Dendritic cell treated with granulocyte-macrophage colony-stimulating factor and Interleukin-4, amounts not matched to agents 40 ng/mL and 50 ng/mL, for 4 days (primary cell): ENCODE measurements at regions of chr13 and their contacts with region 1.

Region 1: DNA sequence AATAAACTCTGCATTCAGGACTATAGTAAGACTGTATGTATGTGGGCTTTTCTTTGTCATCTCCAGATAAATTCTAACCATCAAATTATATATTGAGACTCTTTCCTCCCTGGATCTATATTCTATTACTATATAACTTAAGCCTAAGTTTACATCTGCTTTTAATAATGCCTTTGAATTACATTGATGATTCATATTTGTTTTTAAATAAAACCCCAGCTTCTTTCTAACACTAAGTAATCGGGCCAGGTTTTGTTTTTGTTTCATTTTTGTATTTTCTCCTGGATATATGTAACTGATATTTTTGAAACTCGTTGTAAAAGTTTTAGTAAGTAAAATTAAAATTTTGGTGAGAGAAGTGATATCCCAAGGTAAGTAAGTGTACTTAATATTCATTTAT is 1599.1 kb downstream of the PCDH9 start:
- H3K4me3 Mint-ChIP-seq: no peak overlapping the region
- H3K27ac Mint-ChIP-seq: no peak overlapping the region
- H3K4me1 Mint-ChIP-seq: no peaks in the 10 kb centered on the region
- H3K27me3 Mint-ChIP-seq: no peaks in the 10 kb centered on the region

Region 2: DNA sequence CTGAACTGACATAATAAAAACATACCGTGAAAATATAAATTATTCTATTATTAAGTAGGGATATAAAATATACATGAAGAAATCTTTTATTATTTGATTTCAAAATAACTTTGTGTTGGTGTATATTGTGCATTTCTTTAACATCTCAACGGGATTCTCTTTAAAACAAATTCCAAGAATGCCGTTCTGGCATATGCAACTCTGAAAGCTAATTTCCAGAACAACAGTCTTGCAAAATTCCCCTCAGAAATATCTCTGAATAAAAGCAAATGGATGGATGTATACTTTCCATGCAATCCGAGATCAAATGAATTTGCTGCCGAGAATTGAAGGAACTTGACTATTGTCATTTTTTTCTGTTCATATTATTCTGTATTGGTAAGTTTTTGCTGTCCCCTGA is 19.2 kb after region 1 on chr13:
- intact Hi-C with region 1: loop called (anchors 2 kb)
- H3K4me3 Mint-ChIP-seq: no peak overlapping the region
- H3K27ac Mint-ChIP-seq: no peak overlapping the region
- H3K4me1 Mint-ChIP-seq: no peaks in the 10 kb centered on the region
- H3K27me3 Mint-ChIP-seq: no peaks in the 10 kb centered on the region

Region 3: GRCh38 chr13:65744836-65745235 is 113.8 kb after region 1 on chr13:
- intact Hi-C with region 1: no loop called
- H3K4me3 Mint-ChIP-seq: no peak overlapping the region
- H3K27ac Mint-ChIP-seq: no peak overlapping the region
- H3K4me1 Mint-ChIP-seq: no peaks in the 10 kb centered on the region
- H3K27me3 Mint-ChIP-seq: no peaks in the 10 kb centered on the region